Activated naive CD8-positive, alpha-beta T cell treated with anti-CD3 and anti-CD28 coated beads, Interleukin-2, amount 10 ng/mL, durations not matched to agents 7 days and 5 days (primary cell): ENCODE measurements at regions of chr1 and their contacts with region 1.

Region 1: GRCh38 chr1:155308493-155309422 is at the start of gene FDPS:
- DNase-seq: peak; percentile 91
- ATAC-seq: peak; percentile 100
- H3K4me3 Mint-ChIP-seq: peak within 1 kb of the TSS; percentile 98
- H3K27ac Mint-ChIP-seq: peak within 1 kb of the TSS; percentile 99
- H3K4me1 Mint-ChIP-seq: peaks cover 26% of the 10 kb centered on the region
- H3K27me3 Mint-ChIP-seq: peaks cover 2% of the 10 kb centered on the region
- total RNA-seq, gene FDPS: 238 to 242 TPM

Region 2: GRCh38 chr1:155295183-155295941 is 13.4 kb before region 1 on chr1:
- POLR2A ChIA-PET with region 1: no interaction called
- DNase-seq: no peak
- ATAC-seq: peak; percentile 48
- H3K4me3 Mint-ChIP-seq: no peak overlapping the region
- H3K27ac Mint-ChIP-seq: peak overlapping the region; percentile 46
- H3K4me1 Mint-ChIP-seq: peaks cover 12% of the 10 kb centered on the region
- H3K27me3 Mint-ChIP-seq: peaks cover 51% of the 10 kb centered on the region

Region 3: GRCh38 chr1:155323798-155324610 is 15.2 kb after region 1 on chr1:
- POLR2A ChIA-PET with region 1: interaction called, 22 read pairs
- DNase-seq: peak; percentile 90
- ATAC-seq: peak; percentile 82
- H3K4me3 Mint-ChIP-seq: peak overlapping the region; percentile 90
- H3K27ac Mint-ChIP-seq: peak overlapping the region; percentile 81
- H3K4me1 Mint-ChIP-seq: peaks cover 39% of the 10 kb centered on the region
- H3K27me3 Mint-ChIP-seq: no peaks in the 10 kb centered on the region

Region 4: DNA sequence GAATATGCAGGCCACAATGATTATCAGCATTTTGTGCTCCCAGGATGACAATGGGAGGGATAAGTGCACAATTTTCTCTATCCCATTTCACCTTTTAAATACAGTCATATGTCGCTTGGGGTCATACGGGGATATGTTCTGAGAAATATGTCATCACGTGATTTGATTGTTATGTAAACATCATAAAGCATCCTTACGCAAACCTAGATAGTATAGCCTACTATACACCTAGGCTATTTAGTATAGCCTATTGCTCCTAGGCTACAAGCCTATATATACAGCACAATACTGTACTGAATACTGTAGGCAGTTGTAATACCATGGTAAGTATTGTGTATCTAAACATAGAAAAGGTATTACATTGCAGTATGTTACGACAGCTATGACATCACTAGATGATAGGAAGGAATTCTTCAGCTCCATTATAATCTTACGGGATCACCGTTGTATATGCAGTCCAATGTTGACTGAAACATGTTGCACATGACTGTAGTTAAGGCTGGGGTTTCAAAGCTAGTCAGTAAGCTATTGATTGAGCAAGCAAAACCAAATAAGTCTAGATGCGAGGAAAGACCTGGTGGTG is 30.8 kb after region 1 on chr1:
- POLR2A ChIA-PET with region 1: no interaction called
- DNase-seq: no peak
- ATAC-seq: no peak
- H3K4me3 Mint-ChIP-seq: no peak overlapping the region
- H3K27ac Mint-ChIP-seq: no peak overlapping the region
- H3K4me1 Mint-ChIP-seq: peaks cover 2% of the 10 kb centered on the region
- H3K27me3 Mint-ChIP-seq: no peaks in the 10 kb centered on the region

Region 5: GRCh38 chr1:155360051-155360450 is 51.3 kb after region 1 on chr1:
- POLR2A ChIA-PET with region 1: no interaction called
- DNase-seq: no peak
- ATAC-seq: no peak
- H3K4me3 Mint-ChIP-seq: no peak overlapping the region
- H3K27ac Mint-ChIP-seq: no peak overlapping the region
- H3K4me1 Mint-ChIP-seq: no peaks in the 10 kb centered on the region
- H3K27me3 Mint-ChIP-seq: no peaks in the 10 kb centered on the region